ENCODE measurements at regions of chr6 and their contacts with region 1.

Region 1: GRCh38 chr6:157314705-157315321 is 8.5 kb downstream of the TMEM242 start:
- DNase-seq: no peak
- ATAC-seq: peak; percentile 52 to 77 (median 62)
- H3K4me3 ChIP-seq: no peak overlapping the region
- H3K27ac ChIP-seq: peak overlapping the region; percentile 69
- H3K4me1 ChIP-seq: peaks cover 32% of the 10 kb centered on the region
- H3K27me3 ChIP-seq: no peaks in the 10 kb centered on the region
- CTCF ChIP-seq: peak; percentile 82

Region 2: DNA sequence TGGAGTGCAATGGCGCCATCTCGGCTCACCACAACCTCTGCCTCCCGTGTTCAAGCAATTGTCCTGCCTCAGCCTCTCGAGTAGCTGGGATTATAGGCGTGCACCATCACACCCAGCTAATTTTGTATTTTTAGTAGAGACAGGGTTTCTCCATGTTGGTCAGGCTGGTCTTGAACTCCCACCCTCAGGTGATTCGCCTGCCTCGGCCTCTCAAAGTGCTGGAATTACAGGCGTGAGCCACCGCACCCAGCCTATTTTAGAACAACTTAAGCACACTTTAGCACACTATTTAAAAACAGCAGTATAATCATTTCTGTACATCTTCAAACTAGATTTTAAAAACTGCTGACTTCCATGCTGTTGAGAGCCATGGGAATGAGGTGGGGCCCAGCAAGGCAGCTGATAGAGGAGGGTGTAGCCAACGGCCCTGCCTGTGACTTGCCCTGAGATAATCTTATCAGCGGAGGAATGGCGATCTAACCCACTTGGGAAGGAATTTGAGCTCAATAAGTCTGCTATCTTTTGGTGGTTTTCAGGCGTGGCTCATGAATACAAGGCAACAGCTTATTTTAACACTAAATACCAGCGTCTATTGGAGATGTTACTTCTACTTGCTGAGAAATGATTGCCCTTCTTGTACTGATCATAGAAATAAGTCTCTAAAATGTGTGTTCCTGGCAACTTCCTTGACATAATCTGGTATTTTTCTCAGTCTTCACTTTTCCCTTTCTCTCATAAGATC is 78.3 kb after region 1 on chr6:
- intact Hi-C with region 1: no loop called
- DNase-seq: no peak
- ATAC-seq: no peak
- H3K4me3 ChIP-seq: no peak overlapping the region
- H3K27ac ChIP-seq: no peak overlapping the region
- H3K4me1 ChIP-seq: peaks cover 9% of the 10 kb centered on the region
- H3K27me3 ChIP-seq: no peaks in the 10 kb centered on the region
- CTCF ChIP-seq: no peak

Region 3: DNA sequence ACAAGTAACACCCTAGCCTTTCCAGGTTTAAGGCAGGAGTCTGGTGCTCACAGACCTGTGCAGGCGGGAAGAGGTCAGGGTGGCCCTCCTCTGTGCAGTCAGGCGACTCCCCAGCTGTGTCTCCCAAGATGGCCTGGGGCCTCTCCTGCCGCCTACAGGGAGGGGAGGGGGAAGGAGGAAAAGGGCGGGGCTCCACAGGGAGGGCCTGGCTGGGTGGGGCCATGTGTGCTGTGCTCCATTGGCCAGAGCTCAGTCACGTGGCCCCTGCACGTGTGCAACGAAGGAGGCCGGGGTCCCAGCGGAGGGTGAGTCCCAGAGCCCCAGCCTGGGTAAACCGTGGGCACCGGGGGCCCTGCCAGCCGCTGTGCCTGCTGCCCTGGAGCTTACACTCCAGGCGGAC is 277.7 kb after region 1 on chr6:
- intact Hi-C with region 1: loop called (anchors 2 to 5 kb)
- DNase-seq: no peak
- ATAC-seq: no peak
- H3K4me3 ChIP-seq: no peak overlapping the region
- H3K27ac ChIP-seq: no peak overlapping the region
- H3K4me1 ChIP-seq: peaks cover 1% of the 10 kb centered on the region
- H3K27me3 ChIP-seq: no peaks in the 10 kb centered on the region
- CTCF ChIP-seq: no peak

Region 4: DNA sequence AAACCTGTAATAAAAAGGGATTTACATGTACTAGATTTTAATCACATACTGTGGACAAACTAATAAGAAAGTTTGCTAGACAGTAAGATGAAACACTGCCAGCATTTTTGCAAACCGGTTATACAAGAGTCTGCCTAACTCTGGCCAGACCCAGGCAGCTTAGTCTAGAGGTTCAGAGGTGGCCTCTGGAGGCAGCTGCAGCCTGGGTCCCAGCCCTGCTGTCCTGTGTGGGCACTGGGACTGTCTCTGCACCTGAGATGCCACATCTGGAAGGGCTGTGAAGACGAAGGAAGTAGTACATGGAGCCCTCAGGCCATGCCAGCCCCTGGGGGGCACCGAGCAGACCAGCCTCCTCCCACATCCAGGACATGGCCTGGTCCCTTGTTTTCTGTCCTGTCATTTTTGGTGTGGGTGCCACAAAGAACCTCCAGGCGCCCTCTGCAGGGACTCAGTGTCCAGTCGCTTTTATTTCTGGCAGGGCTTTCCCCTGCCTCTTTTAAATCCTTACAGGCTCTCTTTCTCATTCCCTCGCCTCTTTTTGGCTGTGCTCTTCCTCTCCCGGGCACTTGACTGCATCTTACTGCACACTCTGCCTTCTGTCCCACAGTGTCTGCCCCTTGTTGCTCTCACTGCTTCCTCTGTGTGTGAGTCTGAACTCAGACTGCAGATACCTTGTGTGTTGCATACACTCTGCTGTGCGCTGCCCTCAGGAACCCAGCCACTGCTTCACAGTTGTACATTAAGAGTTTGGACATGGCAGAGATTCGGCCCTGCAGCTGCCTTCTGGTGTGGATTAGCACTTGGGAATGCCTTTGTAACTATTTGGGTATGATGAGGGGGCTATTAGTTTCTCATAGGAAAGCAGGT is 282.9 kb after region 1 on chr6:
- intact Hi-C with region 1: loop called (anchors 2 to 5 kb)
- DNase-seq: peak in 1 of 2 donors; percentile 37
- ATAC-seq: peak; percentile 37 to 86 (median 70)
- H3K4me3 ChIP-seq: no peak overlapping the region
- H3K27ac ChIP-seq: no peak overlapping the region
- H3K4me1 ChIP-seq: peaks cover 3% of the 10 kb centered on the region
- H3K27me3 ChIP-seq: no peaks in the 10 kb centered on the region
- CTCF ChIP-seq: peak; percentile 50

Region 5: GRCh38 chr6:157667211-157668008 is 352.6 kb after region 1 on chr6:
- intact Hi-C with region 1: loop called (anchors 2 to 5 kb)
- DNase-seq: no peak
- ATAC-seq: peak in 3 of 4 donors; percentile 50 to 72 (median 60)
- H3K4me3 ChIP-seq: no peak overlapping the region
- H3K27ac ChIP-seq: no peak overlapping the region
- H3K4me1 ChIP-seq: peaks cover 28% of the 10 kb centered on the region
- H3K27me3 ChIP-seq: no peaks in the 10 kb centered on the region
- CTCF ChIP-seq: peak; percentile 86

Region 6: DNA sequence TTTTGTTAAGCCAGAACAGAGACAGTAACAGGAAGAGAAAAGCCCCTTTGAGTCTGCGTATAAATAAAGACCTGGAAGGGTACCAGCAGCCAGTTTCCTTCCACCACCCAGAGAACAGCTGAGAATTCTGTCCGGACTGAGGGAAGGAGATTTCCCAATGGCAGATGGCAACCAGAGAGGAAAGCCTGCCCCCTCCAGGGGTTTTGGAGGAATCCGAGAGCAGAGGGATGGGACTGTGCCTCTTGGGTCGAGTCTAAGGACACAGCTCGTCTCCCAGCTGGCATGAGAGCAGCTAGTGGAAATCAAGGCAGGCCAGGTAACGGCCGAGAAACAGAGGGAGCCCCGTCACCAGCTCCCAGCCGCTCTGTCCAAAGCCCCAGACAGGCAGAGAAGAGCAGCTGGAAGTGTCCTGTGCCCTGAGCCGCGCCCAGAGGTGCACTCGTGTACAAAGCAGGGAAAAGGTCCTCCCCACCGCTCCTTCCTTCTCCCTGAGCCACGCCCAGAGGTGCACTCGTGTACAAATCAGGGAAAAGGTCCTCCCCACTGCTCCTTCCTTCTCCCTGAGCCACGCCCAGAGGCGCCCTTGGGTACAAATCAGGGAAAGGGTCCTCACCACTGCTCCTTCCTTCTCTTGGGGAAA is 374.3 kb after region 1 on chr6:
- intact Hi-C with region 1: loop called in 1 of 2 experiments (anchors 5 kb)
- DNase-seq: no peak
- ATAC-seq: peak; percentile 88 to 94 (median 90)
- H3K4me3 ChIP-seq: peak overlapping the region; percentile 42
- H3K27ac ChIP-seq: peak overlapping the region; percentile 82
- H3K4me1 ChIP-seq: peaks cover 11% of the 10 kb centered on the region
- H3K27me3 ChIP-seq: peaks cover 0 to 4% (median 0%) of the 10 kb centered on the region in 3 donors
- CTCF ChIP-seq: peak; percentile 30

Region 7: GRCh38 chr6:158311193-158311592 is 996.4 kb after region 1 on chr6:
- intact Hi-C with region 1: no loop called
- DNase-seq: no peak
- ATAC-seq: peak in 2 of 4 donors; percentile 38 to 53
- H3K4me3 ChIP-seq: no peak overlapping the region
- H3K27ac ChIP-seq: no peak overlapping the region
- H3K4me1 ChIP-seq: no peaks in the 10 kb centered on the region
- H3K27me3 ChIP-seq: no peaks in the 10 kb centered on the region
- CTCF ChIP-seq: no peak